ENCODE measurements at regions of chr1 and their contacts with region 1.

Region 1: DNA sequence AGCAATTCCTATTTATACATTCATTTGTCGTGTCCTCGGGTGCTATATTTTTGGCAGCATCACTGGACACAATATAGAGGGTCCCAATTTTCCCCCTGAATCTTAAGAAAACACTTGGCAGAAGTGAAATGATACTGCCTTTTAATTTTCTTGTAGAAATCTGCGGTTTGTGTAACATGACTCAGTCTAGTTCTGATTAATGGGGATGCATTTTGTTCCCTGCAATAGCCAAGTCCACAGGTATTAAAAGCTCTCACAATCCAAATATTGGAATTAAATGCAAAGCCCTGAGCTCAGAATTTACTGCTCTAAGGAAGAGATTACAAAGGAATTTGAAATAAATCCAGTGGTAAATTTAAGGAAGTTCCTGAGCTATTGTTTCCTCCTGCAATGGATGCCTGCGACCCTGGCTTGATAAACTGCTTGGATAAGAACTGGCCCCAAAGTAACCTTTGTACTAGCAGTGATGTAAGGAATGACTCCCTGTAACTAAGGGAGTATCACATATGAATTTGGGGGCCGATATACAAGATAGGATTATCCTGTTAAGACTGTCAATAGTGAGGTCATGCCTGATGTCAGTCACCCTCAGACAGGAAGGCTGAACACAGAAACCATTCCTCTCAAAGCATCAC is 349.7 kb upstream of the C1orf87 start:
- DNase-seq: no peak
- CTCF ChIP-seq: no peak

Region 2: DNA sequence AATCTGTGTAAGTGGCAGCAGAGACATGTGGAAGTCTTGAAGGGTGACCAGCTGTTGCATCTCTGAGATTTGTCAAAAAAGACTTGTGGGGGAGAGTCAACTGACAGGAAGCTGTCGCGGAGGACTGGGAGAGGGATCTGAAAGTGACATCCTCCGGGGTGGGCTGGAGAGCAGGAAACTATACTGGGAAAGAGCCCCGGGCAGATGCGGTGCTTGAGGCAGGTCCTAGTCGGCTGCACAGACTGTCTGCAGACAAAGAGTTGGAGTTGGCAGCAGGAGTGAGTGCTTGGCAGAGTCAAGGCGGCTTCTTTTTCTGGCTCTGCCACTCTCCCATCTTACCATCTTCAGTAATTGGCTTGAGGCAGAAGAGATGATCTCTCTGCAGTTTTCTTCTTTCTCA is 55.7 kb before region 1 on chr1:
- CTCF ChIA-PET with region 1: no interaction called
- POLR2A ChIA-PET with region 1: no interaction called
- DNase-seq: no peak
- CTCF ChIP-seq: no peak

Region 3: DNA sequence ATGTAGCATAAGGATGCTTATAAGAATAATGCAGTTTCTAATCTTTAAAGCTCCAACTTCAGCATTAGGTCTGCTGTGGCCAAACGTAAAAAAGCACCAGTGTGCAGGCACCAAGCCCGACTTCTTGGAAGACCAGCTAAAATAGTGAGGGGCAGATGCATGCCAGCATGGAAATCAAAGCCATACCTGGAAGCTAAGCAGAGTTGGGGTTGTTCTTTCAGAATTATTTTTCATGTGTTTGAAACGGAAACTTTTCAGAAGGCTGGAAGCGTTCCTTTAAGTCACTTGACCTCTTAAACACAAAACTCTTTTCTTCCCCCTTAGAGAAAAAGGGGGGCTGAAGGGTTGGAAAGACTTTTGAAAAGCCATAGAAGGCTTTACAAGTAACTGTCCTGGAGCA is 20.4 kb before region 1 on chr1:
- CTCF ChIA-PET with region 1: no interaction called
- POLR2A ChIA-PET with region 1: no interaction called
- DNase-seq: no peak
- CTCF ChIP-seq: no peak

Region 4: GRCh38 chr1:60413091-60413490 is 10.2 kb before region 1 on chr1:
- CTCF ChIA-PET with region 1: interaction called, 14 read pairs
- POLR2A ChIA-PET with region 1: no interaction called
- DNase-seq: no peak
- CTCF ChIP-seq: no peak

Measured in GM10248 (cell line).